ENCODE measurements at regions of chr16 and their contacts with region 1.

Region 1: DNA sequence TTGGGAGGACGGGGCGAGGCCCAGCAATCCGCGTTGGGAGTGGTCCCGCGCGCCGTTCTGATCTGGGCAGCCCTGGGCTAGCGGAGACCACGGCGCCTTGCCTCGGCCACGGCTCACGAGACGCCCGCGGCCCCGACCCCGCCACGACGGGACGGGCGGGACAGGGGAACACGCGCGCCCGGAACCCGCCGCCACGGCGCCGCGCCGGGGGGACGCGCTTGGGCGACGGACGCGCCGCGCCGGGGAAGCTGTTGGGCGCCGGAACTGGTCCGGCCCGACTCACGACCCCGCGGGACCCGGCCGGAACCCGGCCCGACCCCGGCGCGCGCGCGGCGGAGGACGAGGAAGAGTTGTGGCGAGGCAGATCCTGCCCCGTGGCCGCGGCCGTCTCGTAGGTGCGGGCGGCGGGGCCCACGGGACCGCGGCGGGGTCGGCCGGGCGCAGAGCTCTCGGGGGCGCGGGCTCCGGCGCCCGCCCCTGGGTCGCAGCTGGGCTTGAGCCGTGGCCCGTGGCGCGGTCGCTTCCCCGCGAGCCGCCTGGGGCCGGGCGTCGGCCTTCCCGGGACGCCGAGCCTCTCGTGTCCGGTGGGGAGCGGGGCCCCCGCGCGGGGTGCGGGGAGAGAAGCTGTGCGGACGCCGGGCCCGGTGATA is at the start of gene ACSF3:
- DNase-seq: peak; percentile 86
- ATAC-seq: peak; percentile 93
- total RNA-seq, gene ACSF3: 17.0 TPM

Region 2: DNA sequence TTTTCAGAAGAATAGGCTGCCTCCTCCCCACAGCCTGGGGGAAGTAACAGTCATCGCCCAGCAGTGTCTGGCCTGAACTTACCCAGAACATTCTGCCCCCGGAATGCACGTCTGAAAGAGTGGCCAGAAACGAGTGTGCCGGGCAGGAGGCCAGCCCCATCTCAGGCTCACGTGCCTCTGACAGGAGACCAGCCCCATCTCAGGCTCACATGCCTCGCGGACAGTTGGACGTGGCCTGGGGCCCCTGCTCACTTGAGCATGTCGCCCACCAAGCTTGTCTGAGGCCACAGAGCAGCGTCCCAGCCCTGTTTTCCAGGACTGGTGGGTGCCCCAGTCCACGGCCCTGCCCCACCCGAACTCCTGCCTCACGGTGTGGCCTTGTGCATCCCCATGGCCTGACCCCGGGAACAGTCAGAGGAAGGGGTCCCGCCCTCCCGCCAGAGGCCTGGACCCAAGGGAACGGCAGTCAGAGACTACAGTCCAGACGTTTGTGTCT is 61.5 kb after region 1 on chr16:
- intact Hi-C with region 1: loop called (anchors 5 kb)
- DNase-seq: peak; percentile 83
- ATAC-seq: peak; percentile 78

Measured in Right ventricle myocardium inferior (tissue), 1 donor.